ENCODE measurements at regions of chr17 and their contacts with region 1.

Region 1: GRCh38 chr17:45098869-45099616 is 33.3 kb downstream of the PLCD3 start:
- DNase-seq: peak; percentile 89
- ATAC-seq: peak; percentile 98
- H3K4me3 Mint-ChIP-seq: no peak overlapping the region
- H3K27ac Mint-ChIP-seq: no peak overlapping the region
- H3K4me1 Mint-ChIP-seq: no peaks in the 10 kb centered on the region
- H3K27me3 Mint-ChIP-seq: no peaks in the 10 kb centered on the region

Region 2: GRCh38 chr17:44919885-44920564 is 179.0 kb before region 1 on chr17:
- CTCF ChIA-PET with region 1: interaction called, 10 read pairs
- POLR2A ChIA-PET with region 1: no interaction called
- intact Hi-C with region 1: loop called in 1 of 2 experiments (anchors 1 kb)
- DNase-seq: peak; percentile 85
- ATAC-seq: peak; percentile 93
- H3K4me3 Mint-ChIP-seq: no peak overlapping the region
- H3K27ac Mint-ChIP-seq: no peak overlapping the region
- H3K4me1 Mint-ChIP-seq: no peaks in the 10 kb centered on the region
- H3K27me3 Mint-ChIP-seq: peaks cover 9% of the 10 kb centered on the region

Region 3: GRCh38 chr17:45051060-45051719 is 47.9 kb before region 1 on chr17 and contains the start of gene DCAKD:
- CTCF ChIA-PET with region 1: interaction called, 7 read pairs
- POLR2A ChIA-PET with region 1: no interaction called
- intact Hi-C with region 1: loop called in 1 of 2 experiments (anchors 5 kb)
- DNase-seq: peak; percentile 96
- ATAC-seq: peak; percentile 97
- H3K4me3 Mint-ChIP-seq: peak within 1 kb of the TSS; percentile 87
- H3K27ac Mint-ChIP-seq: peak within 1 kb of the TSS; percentile 95
- H3K4me1 Mint-ChIP-seq: peaks cover 50% of the 10 kb centered on the region
- H3K27me3 Mint-ChIP-seq: no peaks in the 10 kb centered on the region
- total RNA-seq, gene DCAKD: 34.8 to 36.2 TPM

Region 4: GRCh38 chr17:45067637-45068036 is 31.4 kb before region 1 on chr17:
- CTCF ChIA-PET with region 1: interaction called, 11 read pairs
- POLR2A ChIA-PET with region 1: no interaction called
- intact Hi-C with region 1: loop called in 1 of 2 experiments (anchors 2 kb)
- DNase-seq: no peak
- ATAC-seq: no peak
- H3K4me3 Mint-ChIP-seq: no peak overlapping the region
- H3K27ac Mint-ChIP-seq: no peak overlapping the region
- H3K4me1 Mint-ChIP-seq: peaks cover 35% of the 10 kb centered on the region
- H3K27me3 Mint-ChIP-seq: no peaks in the 10 kb centered on the region

Region 5: DNA sequence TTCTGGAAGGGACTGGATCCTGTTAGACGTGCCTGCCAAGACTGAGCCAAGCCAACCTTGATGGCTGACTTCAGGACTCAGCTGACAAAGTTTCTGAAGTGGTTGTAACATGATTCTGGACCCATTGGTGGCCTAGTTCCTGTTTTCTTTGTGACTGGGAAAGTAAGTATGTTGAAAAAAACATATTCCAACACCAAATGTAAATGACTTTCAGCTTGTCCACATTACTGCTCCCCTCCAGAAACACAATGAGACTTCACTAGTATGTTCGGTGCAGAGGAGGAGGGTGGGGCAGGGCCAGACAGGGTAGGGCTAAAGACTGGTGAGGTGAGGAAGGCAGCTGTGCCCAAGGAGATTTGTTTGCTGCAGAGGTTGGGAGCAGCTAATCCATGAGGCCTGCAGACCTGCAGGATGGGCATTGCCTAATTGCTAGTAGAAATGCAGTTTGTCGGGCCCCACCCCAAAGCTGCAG is 11.5 kb before region 1 on chr17:
- CTCF ChIA-PET with region 1: interaction called, 13 read pairs
- POLR2A ChIA-PET with region 1: no interaction called
- intact Hi-C with region 1: no loop called
- DNase-seq: no peak
- ATAC-seq: no peak
- H3K4me3 Mint-ChIP-seq: no peak overlapping the region
- H3K27ac Mint-ChIP-seq: no peak overlapping the region
- H3K4me1 Mint-ChIP-seq: no peaks in the 10 kb centered on the region
- H3K27me3 Mint-ChIP-seq: no peaks in the 10 kb centered on the region

Measured in activated CD4-positive, alpha-beta T cell treated with anti-CD3 and anti-CD28 coated beads for 36 hours (primary cell).